Posterior vena cava (tissue), 2 donors: ENCODE measurements at regions of chr11 and their contacts with region 1.

Region 1: GRCh38 chr11:69918938-69919650 is 99.9 kb upstream of the FGF3 start:
- DNase-seq: peak; percentile 94

Region 2: GRCh38 chr11:68854273-68854958 is 1064.7 kb before region 1 on chr11:
- intact Hi-C with region 1: loop called in 1 of 2 experiments (anchors 5 kb)
- DNase-seq: peak; percentile 47

Region 3: DNA sequence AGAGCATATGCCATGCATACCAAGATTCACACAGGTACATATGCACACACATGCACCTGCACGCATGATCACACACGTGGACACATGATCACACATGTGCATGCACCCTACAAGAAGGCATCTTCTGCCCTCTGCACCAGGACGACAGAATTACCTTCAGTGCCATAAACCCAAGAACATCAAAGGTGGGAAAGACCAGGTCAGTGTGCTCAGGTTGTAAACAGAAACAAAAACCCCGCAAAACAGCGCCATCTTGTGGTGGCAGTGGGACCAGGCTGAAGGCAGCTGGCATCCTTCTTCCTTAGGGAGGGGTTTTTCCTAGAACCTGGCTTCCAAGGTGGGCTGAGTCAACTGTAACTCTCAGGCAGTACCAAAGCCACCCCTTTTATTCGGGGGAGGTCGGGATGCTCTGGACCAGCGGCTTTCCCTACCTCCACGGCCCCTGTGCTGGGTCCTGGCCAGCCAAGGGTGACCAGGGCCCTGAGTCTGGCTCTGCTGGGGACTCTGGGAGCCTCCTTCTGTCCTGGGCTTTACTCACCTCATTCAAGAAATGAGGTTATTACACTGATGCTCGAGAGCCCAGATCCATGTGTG is 30.5 kb before region 1 on chr11:
- intact Hi-C with region 1: no loop called
- DNase-seq: peak; percentile 81

Region 4: DNA sequence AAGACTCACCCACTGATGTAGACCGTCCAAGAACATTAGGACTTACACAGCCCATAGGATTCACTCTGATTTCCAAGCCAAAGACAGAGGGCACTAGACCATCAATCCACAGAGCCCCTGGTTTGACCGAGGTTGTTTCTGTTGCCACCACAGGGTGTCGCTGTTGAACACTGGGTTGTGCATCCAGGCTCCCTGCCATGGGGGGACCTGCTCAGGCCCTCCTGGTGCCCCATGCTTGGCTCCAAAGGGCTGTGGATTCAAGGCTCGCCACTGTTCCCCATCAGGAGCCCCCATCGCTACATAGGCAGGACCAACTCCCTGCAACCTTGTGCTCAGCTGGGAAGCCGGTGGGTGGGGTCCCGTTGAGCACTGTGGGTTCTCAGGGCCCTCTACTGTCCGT is 31.0 kb after region 1 on chr11:
- intact Hi-C with region 1: loop called in 1 of 2 experiments (anchors 1 kb)
- DNase-seq: peak; percentile 60

Region 5: GRCh38 chr11:70073871-70074371 is 154.8 kb after region 1 on chr11:
- intact Hi-C with region 1: loop called (anchors 5 to 10 kb)
- DNase-seq: peak; percentile 76

Region 6: GRCh38 chr11:70129051-70129592 is 210.0 kb after region 1 on chr11:
- intact Hi-C with region 1: loop called in 1 of 2 experiments (anchors 1 kb)
- DNase-seq: no peak